OCI-LY7 (cell line): ENCODE measurements at regions of chr5 and their contacts with region 1.

Region 1: DNA sequence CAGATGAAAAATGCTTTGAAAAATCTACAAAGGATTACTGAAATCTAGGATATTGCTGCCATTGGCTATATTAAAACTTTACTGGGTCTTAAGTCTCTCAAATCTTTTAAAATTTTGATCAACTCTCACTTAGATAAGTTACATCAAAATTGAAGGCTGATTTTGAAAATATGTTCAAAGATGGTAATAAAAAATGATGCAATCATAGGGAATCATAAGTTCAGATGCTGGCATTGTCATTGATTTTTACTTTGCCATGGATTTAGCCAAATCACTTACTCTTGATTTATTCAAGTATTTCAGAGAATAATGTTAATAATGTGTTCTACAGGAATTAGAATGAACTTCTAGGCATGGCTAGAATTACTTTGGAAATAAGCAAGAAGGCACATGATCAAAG is 24.2 kb downstream of the LARS1 start:
- DNase-seq: no peak
- H3K4me3 ChIP-seq: no peak overlapping the region
- H3K27ac ChIP-seq: no peak overlapping the region
- H3K4me1 ChIP-seq: no peaks in the 10 kb centered on the region
- CTCF ChIP-seq: no peak

Region 2: DNA sequence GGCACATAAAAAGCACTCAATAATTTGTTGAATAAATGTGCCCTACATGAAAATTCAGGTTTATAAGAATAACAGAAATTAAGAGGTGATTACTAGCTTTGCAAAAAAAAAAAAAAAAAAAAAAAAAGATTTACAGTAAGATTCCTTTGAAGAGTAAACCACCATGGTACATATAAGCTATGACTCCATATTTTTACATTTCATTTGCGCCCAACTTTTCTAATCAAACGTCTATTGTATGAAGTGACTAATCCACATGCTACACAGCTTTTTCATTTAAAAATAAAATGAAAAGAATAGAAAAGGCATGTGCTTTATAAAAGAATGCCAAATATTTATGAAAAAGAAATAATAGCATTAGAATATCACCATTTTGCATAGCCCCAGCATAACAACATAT is 52.8 kb before region 1 on chr5 and contains the start of gene PLAC8L1:
- CTCF ChIA-PET with region 1: no interaction called
- POLR2A ChIA-PET with region 1: no interaction called
- intact Hi-C with region 1: no loop called
- DNase-seq: no peak
- H3K4me3 ChIP-seq: no peak within 1 kb of the TSS
- H3K27ac ChIP-seq: no peak within 1 kb of the TSS
- H3K4me1 ChIP-seq: peaks cover 26% of the 10 kb centered on the region
- CTCF ChIP-seq: no peak
- total RNA-seq, gene PLAC8L1: 0.28 and 1.3 TPM in 2 replicates

Region 3: GRCh38 chr5:146116361-146116760 is 41.9 kb before region 1 on chr5:
- CTCF ChIA-PET with region 1: no interaction called
- POLR2A ChIA-PET with region 1: interaction called, 6 read pairs
- intact Hi-C with region 1: loop called (anchors 5 kb)
- DNase-seq: no peak
- H3K4me3 ChIP-seq: no peak overlapping the region
- H3K27ac ChIP-seq: no peak overlapping the region
- H3K4me1 ChIP-seq: peaks cover 15% of the 10 kb centered on the region
- CTCF ChIP-seq: no peak

Region 4: GRCh38 chr5:146273109-146273508 is 114.9 kb after region 1 on chr5:
- CTCF ChIA-PET with region 1: no interaction called
- POLR2A ChIA-PET with region 1: no interaction called
- intact Hi-C with region 1: loop called (anchors 5 kb)
- DNase-seq: no peak
- H3K4me3 ChIP-seq: no peak overlapping the region
- H3K27ac ChIP-seq: no peak overlapping the region
- H3K4me1 ChIP-seq: no peaks in the 10 kb centered on the region
- CTCF ChIP-seq: no peak